GM12878 (cell line): ENCODE measurements at regions of chr17 and their contacts with region 1.

Region 1: DNA sequence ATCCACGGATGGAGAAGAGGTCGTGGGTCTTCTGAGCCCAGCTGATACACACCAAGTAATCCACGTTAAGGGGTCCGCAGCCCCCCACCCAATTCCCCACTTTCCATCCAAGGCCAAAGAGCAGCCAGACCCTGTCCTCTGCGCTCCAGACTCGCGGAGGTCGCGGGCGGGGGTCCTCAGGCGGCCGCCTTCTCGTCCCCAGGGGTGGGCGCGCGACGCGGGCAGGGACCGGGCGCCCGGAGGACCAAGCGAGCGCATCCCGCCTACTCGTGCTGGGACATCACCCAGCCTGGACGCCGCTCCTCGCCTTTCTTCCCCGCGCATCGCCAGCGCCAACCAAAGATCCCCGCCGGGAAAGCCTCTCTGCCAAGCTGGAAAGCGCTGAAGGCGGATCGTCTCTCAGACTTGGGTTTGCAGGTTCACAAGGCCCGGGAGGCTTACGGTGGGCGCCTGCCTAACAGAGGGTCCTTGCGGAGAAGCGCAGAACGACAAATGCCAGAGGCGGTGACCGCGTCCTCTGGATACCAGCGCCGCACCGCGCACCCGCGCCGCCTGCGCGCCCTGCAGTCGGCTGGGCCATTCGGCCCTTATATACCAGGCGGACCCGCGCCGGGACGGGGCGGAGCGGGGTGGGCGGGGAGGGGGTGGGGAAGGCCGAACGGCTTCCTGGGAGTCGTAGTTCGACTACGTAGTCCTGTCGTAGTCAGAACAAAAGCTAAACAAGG is 471.6 kb downstream of the SOX9 start:
- DNase-seq: no peak
- ATAC-seq: peak; percentile 82
- H3K4me3 ChIP-seq: peak overlapping the region; percentile 59
- H3K27ac ChIP-seq: no peak overlapping the region
- H3K4me1 ChIP-seq: 0 out of 2 replicates have a peak, but pooled peaks cover 3% of the 10 kb centered on the region
- H3K27me3 ChIP-seq: no peaks in the 10 kb centered on the region; a peak in 2 of 4 replicates
- CTCF ChIP-seq: no peak
- EP300 ChIP-seq: no peak
- POLR2A ChIP-seq: peak; percentile 90
- RAD21 ChIP-seq: no peak

Region 2: DNA sequence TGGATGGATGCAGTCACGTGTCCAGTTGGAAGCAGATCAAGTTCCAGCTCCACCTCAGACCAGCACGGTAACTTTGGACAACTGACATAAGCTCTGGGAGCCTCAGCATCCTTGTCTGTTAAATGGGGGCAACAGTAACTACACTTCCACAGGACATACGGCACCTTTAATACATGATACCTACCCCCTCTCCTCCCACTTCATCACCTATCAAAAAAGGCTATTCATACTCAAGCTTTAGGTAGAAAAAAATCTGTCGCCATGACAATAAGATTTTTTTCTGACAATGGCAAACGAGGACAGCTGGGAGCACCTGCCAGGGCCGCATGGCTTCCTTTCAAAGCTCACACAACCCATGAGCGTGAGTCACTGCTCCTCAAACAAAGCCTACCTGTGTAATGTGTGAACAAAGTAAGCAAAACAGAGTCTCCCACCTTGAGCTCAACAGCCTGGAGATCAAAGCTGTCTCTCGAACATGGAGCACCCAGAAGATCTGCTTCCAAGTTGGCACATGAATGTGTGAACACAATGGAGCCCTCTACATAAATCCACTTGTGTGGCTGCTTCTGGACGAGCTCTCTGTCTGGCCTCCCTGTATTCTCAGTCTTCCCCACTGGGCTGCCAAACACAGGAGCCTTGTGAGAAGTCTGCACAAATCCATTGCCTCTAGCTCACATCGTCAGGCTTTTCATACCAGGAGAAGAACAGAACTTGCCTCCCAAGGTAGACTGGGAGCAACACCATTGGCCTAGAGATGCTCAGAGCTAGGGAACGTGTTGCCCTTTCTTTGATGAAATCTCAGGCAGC is 11.9 kb before region 1 on chr17:
- CTCF ChIA-PET with region 1: interaction called, 9 read pairs
- POLR2A ChIA-PET with region 1: interaction called, 10 read pairs
- RAD21 ChIA-PET with region 1: interaction called, 12 read pairs
- SMC1A ChIA-PET with region 1: interaction called, 30 read pairs
- in situ Hi-C with region 1: no loop called
- intact Hi-C with region 1: no loop called
- DNase-seq: no peak
- ATAC-seq: peak; percentile 19; the same call in 1 of the 3 replicates
- H3K4me3 ChIP-seq: no peak overlapping the region
- H3K27ac ChIP-seq: no peak overlapping the region
- H3K4me1 ChIP-seq: no peaks in the 10 kb centered on the region
- H3K27me3 ChIP-seq: 0 out of 4 replicates have a peak, but pooled peaks cover 0 to 2% of the 10 kb centered on the region in 2 experiments
- CTCF ChIP-seq: no peak
- EP300 ChIP-seq: no peak
- POLR2A ChIP-seq: no peak
- RAD21 ChIP-seq: no peak

Region 3: DNA sequence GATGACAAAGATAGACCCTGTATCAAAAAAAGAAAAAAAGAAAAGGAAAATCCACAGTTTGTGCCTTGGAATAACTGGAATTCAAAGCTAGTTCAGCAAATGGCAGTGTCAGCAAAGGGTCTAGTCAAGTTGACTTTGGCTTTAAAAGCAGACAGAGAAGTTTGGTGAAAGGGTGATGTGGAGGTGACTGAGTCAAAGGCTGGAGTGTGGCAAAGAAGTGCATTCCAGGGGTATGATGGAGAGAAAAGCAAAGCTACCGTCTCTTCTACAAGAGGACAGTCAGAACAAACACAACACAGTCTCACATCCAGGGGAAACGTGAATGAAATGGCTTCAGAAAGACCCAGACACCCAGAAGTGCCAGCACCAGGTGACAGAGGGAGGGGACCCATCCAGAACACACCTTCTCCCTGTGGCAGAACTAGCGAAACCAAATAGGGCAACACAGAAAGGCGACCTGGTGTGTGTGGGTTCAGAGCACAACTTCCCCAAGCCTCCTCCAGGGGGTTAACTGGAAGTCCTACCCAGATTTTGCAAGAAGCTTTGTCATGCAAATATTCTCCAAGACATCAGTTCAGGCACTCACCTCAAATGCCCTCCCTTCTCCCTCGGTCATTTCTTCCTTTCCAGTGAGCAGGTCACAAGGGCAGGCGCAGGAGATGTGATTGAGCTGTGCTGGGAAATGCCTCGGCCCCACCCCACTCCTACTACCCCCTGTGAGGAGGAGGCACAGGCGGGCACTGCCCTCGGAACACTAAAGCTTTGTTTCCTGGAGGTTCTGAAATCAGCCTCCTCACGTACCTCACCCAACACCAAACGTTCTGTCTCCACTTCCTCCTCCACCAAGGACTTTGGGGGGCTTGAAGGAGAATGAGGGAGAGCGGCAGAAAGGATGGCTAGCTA is 10.4 kb after region 1 on chr17:
- CTCF ChIA-PET with region 1: interaction called, 16 read pairs
- POLR2A ChIA-PET with region 1: interaction called, 52 read pairs
- RAD21 ChIA-PET with region 1: interaction called, 43 read pairs
- SMC1A ChIA-PET with region 1: interaction called, 50 read pairs
- in situ Hi-C with region 1: no loop called
- intact Hi-C with region 1: no loop called
- DNase-seq: no peak
- ATAC-seq: peak; percentile 62
- H3K4me3 ChIP-seq: no peak overlapping the region
- H3K27ac ChIP-seq: peak overlapping the region; percentile 31
- H3K4me1 ChIP-seq: peaks cover 6% of the 10 kb centered on the region
- H3K27me3 ChIP-seq: no peaks in the 10 kb centered on the region
- CTCF ChIP-seq: 0 out of 6 replicates have a peak, but pooled peaks of 2 of the 3 experiments have one; percentile 4 to 17
- EP300 ChIP-seq: no peak
- POLR2A ChIP-seq: no peak
- RAD21 ChIP-seq: no peak

Region 4: DNA sequence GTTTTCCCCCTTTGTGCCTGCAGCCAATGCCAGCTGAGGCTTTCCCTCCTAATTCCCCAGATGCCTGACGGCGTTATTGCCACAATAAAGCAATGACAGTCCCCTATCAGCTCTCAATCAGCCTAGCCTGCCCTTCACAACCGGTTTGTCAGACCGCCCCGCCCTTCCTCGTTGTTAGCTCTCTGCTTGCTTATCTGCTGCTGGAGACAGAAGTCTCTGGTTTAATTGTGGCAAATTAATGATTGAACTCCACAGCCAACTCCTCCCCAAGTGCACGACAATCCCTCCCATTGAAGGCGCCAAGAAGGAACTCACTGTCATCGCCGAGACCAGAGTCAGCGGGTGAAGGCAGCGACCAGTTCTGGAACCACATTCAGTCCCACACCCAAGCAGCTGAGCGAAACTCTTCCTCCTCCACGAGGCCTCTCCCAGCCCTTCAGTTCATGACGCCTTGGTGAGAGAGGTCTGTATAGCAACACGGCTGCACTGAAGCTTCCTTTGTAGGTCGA is 25.7 kb after region 1 on chr17:
- CTCF ChIA-PET with region 1: interaction called, 15 read pairs
- POLR2A ChIA-PET with region 1: interaction called, 31 read pairs
- RAD21 ChIA-PET with region 1: interaction called, 28 read pairs
- SMC1A ChIA-PET with region 1: interaction called, 45 read pairs
- in situ Hi-C with region 1: no loop called
- intact Hi-C with region 1: no loop called
- DNase-seq: no peak
- ATAC-seq: peak; percentile 48
- H3K4me3 ChIP-seq: no peak overlapping the region
- H3K27ac ChIP-seq: no peak overlapping the region
- H3K4me1 ChIP-seq: no peaks in the 10 kb centered on the region
- H3K27me3 ChIP-seq: no peaks in the 10 kb centered on the region
- CTCF ChIP-seq: no peak
- EP300 ChIP-seq: no peak
- POLR2A ChIP-seq: no peak
- RAD21 ChIP-seq: no peak